ENCODE measurements at regions of chr9 and their contacts with region 1.

Region 1: DNA sequence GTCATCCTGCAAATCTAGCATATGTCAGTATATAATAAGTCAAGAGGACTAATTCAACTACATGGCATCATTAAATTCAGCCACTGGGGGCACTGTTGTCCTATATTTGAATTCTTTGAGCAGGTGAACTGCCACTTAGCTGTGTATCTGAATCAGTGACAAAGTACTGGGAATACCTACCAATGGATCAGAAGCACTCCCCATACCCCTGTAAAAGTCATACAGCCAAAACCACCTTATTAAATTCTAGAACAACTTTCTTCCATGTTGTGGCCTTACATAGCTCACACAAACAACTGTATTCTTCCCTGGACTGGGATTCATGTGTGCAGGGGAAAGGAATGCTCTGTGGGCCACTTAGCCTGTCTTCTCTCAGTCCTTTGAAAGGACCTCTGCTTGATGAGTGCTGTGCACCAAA is 57.4 kb upstream of the PLPP6 start:
- DNase-seq: peak; percentile 67
- H3K4me3 Mint-ChIP-seq: no peak overlapping the region
- H3K27ac Mint-ChIP-seq: no peak overlapping the region
- H3K4me1 Mint-ChIP-seq: peaks cover 22% of the 10 kb centered on the region
- H3K27me3 Mint-ChIP-seq: no peaks in the 10 kb centered on the region

Region 2: DNA sequence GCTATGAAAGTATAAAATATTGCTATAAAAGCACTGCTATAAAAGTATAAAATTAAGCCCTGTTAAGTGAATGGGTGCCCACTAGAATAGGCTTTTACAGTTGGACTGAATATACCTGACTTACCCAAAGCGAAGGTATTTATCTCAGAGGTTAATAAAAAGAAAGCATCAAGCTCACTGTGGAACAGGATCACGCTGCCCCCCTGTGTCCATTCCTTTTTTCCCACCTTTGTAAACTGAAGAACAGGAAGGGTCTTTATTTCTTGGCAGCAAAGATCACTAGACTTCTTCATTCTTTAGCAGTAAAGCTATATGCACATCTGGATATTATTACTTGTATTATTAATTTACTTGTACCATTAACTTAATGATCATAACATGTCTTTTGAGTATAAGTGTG is 35.3 kb after region 1 on chr9:
- CTCF ChIA-PET with region 1: interaction called, 24 read pairs
- POLR2A ChIA-PET with region 1: interaction called, 3 read pairs
- DNase-seq: peak; percentile 53
- H3K4me3 Mint-ChIP-seq: no peak overlapping the region
- H3K27ac Mint-ChIP-seq: no peak overlapping the region
- H3K4me1 Mint-ChIP-seq: no peaks in the 10 kb centered on the region
- H3K27me3 Mint-ChIP-seq: peaks cover 5% of the 10 kb centered on the region

Region 3: GRCh38 chr9:4750023-4750673 is 145.5 kb after region 1 on chr9:
- CTCF ChIA-PET with region 1: interaction called, 10 read pairs
- POLR2A ChIA-PET with region 1: no interaction called
- DNase-seq: no peak
- H3K4me3 Mint-ChIP-seq: no peak overlapping the region
- H3K27ac Mint-ChIP-seq: no peak overlapping the region
- H3K4me1 Mint-ChIP-seq: peaks cover 7% of the 10 kb centered on the region
- H3K27me3 Mint-ChIP-seq: peaks cover 4% of the 10 kb centered on the region